ENCODE measurements at regions of chr9 and their contacts with region 1.

Region 1: DNA sequence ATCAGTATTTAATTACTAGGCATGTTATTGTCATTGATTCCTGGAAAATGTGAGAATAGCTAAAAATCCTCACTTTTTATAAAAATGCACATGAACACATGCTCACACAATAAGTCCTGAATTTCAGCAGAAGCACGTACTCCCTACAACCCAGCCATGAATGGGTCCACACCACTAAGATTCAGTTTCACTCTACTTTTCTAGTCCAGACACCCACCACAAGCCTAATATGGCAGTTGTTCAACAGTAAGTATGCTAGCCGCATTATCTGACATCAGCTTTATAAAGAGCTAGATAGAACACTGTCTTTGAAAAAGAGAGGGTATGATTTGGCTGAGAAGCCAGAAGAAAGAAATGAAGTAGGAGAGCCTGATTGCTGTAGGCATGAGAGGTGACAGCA is 639.3 kb downstream of the BRINP1 start:
- DNase-seq: no peak

Region 2: DNA sequence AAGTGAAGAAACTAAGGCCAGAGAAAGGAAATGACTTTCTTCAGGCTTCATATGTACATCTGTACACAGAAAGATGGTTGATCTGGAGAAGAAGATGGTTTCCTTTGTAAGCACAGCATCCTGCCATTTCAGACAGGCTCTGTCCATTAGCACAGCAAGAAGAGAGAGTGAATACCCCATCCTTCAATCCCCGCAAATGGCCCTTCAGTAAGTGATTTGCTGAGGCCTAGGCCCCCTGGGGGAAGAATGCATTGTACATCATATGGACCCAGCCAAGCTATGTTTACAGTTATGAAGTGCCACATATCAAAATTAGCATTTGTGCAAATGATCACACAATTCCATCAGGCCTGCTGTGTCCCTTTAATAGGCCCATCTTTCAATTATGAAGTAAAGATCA is 18.1 kb before region 1 on chr9:
- intact Hi-C with region 1: no loop called
- DNase-seq: no peak

Region 3: DNA sequence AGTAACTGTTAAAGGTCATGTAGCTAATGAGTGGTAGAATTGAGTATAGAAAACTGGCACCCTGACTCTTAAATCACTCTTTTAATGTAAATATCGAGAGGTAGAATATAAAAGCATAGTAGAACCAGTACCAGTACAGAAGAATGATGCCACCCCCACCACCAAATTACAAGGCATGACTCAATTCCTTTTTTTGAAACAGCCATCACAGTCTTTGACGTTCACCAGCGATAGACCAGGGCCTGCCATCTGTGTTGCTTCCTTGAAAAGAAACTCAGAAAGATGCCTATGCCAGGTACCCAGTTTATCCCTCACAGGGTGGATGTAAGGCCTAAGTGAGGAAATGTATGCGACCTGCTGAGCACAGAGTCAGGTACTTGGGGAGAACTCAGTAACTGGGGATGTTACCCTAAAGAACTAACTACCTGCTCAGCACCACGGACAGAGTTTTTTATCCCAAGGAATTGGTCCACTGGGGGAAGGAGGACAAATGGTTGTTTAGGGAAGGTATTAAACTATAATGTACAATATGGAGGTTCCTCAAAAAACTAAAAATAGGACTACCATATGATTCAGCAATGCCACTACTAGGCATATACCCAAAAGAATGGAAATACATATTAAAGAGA is 522.8 kb after region 1 on chr9:
- intact Hi-C with region 1: no loop called
- DNase-seq: no peak

Region 4: DNA sequence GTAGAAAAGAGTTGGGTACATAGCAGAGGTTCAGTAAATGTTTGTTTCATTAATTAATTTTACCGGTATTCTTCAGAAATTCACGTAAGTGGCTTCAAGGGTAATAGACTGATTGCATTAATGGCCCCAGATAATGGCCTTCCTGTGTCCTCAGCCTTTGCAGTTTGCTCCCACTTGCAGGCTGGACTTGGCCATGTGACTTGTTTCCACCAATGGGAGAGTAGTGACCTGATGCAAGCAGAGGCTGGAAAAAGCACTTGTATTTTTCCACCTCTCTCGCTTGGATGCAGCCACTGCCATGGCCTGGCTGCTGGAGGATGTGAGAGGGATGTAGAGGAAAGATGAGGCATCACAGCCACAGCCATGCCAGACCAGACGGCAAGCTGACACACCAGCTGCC is 1369.1 kb after region 1 on chr9:
- intact Hi-C with region 1: loop called in 1 of 2 experiments (anchors 5 kb)
- DNase-seq: no peak

Measured in posterior vena cava (tissue), 2 donors.